Heart right ventricle (tissue), 16 donors: ENCODE measurements at regions of chr14 and their contacts with region 1.

Region 1: DNA sequence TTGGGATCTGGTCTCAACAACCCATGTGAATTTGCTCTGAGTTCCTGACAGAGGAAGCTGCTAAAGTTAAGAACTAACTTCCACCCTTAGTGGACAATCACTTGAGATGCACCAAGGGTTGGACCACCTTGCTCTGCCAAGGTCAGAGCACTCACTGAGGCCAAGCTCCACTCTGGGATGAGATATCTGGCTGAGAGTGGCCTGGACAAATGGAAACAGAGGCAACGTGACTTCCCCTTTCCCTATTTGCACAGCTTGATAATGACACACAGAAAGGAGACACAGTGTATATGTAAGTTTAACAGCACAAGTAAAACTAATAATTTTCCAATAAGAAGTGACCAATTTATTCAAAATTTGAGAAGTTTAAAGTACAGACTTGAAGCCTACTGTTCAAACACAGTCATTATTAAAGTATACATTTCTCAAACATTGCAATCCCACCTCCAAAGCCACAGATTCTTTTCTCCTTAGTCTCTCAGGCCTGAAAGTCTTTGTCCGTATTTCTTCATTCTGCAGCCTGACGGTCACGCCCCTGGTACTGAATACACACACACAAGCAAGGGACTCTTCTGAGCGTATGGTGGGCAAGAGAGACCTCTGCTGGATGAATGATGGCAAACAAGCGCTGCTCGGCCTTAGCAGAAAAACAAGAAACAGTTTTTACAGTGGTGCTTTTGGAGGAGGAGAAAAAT is 28.6 kb downstream of the TMEM30B start:
- DNase-seq: peak; percentile 18 to 73
- ATAC-seq: peak in 7 of 8 donors; percentile 86 to 96 (median 95)
- H3K4me3 ChIP-seq: no peak overlapping the region
- H3K27ac ChIP-seq: no peak overlapping the region
- H3K4me1 ChIP-seq: peaks cover 0 to 10% (median 3%) of the 10 kb centered on the region in 9 donors
- H3K27me3 ChIP-seq: no peaks in the 10 kb centered on the region
- CTCF ChIP-seq: peak; percentile 50 to 90 (median 84)

Region 2: GRCh38 chr14:60349663-60350365 is 902.7 kb before region 1 on chr14:
- intact Hi-C with region 1: loop called in 8 of 10 experiments (anchors 5 to 10 kb)
- DNase-seq: peak in 1 of 2 donors; percentile 26
- ATAC-seq: peak in 3 of 8 donors; percentile 51 to 73 (median 65)
- H3K4me3 ChIP-seq: peak overlapping the region in 2 of 10 donors; percentile 15 to 27
- H3K27ac ChIP-seq: no peak overlapping the region
- H3K4me1 ChIP-seq: peaks cover 0 to 7% (median 5%) of the 10 kb centered on the region in 9 donors
- H3K27me3 ChIP-seq: peaks cover 0 to 6% (median 0%) of the 10 kb centered on the region in 7 donors
- CTCF ChIP-seq: peak; percentile 41 to 73 (median 67)

Region 3: DNA sequence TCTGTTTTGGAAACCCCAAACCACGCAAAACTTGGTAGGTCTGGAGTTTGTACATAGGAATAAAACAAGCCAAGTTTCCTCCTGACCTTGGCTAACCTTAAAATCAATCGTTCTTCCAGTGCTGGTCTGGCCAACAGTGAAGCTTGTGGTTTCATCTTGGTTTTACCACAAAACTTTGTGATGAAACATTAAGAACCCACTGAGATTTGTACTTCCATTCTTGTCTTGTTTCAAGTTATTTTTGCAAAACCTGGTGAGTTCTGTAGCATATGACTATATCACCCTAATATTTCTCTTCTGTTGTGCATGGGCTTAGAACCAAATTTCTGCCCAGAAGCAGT is 629.6 kb before region 1 on chr14:
- intact Hi-C with region 1: loop called (anchors 1 to 5 kb)
- DNase-seq: no peak
- ATAC-seq: no peak
- H3K4me3 ChIP-seq: no peak overlapping the region
- H3K27ac ChIP-seq: no peak overlapping the region
- H3K4me1 ChIP-seq: no peaks in the 10 kb centered on the region
- H3K27me3 ChIP-seq: peaks cover 0 to 45% (median 15%) of the 10 kb centered on the region in 7 donors
- CTCF ChIP-seq: no peak

Region 4: DNA sequence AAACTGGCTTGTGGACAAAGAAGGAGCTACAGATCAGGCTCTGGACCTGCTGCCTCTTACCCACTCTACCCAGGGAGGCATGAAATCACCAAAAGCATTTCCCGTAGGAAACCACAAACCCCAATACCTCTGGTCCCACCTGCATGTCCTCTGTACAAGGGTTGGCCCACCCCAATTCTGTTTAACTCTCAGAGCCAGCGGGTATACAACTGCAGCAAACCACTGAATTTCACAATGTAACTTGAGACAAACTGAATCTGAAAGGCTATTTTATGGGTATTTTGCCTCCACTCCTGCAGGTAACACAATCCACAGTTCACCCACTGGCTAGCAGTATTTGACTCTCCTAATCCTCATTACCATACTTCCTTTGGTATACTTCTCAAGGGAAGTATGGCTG is 619.7 kb before region 1 on chr14:
- intact Hi-C with region 1: loop called in 1 of 10 experiments (anchors 5 kb)
- DNase-seq: no peak
- ATAC-seq: no peak
- H3K4me3 ChIP-seq: no peak overlapping the region
- H3K27ac ChIP-seq: no peak overlapping the region
- H3K4me1 ChIP-seq: peaks cover 0 to 8% (median 6%) of the 10 kb centered on the region in 9 donors
- H3K27me3 ChIP-seq: peaks cover 0 to 86% (median 43%) of the 10 kb centered on the region in 7 donors
- CTCF ChIP-seq: no peak

Region 5: DNA sequence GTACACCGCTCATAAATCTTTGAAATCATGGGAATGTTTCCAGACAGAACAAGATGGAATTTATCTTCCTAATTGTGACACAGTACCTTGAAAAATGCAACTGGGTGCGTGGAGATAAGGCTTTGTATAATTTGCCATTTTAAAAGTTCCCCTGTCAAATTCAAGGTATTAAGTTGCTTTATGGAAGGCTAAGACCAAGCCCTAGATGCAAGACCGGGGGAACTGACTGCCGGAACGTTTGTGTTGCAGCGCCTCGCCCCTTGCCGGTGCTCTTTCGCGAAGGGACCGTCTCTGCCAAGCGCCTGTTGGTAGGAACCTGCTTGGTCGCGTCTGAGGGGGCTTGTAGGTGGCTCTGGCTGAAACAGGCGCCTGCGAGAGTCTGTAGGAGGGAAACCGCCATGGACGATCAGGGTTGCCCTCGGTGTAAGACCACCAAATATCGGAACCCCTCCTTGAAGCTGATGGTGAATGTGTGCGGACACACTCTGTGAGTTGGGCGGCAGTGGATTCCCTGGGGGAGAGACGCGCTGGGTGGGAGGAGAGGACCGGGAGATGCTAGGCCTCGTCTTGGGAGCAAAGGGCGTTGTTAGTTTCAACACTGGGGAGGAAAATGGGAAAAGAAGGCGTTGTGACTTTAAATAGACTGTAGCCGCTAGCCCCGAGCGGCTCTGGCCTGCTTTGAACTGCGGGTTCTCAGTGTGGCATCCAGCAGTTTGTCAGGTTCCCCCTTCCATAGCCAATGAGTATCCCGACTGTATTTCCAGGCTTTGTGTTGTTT is 517.9 kb before region 1 on chr14 and contains the start of gene MNAT1:
- intact Hi-C with region 1: loop called in 1 of 10 experiments (anchors 10 kb)
- DNase-seq: peak; percentile 75 to 76
- ATAC-seq: peak; percentile 88 to 98 (median 96)
- H3K4me3 ChIP-seq: peak within 1 kb of the TSS; percentile 58 to 96 (median 82)
- H3K27ac ChIP-seq: peak within 1 kb of the TSS in 9 of 10 donors; percentile 55 to 85 (median 82)
- H3K4me1 ChIP-seq: peaks cover 0 to 30% (median 26%) of the 10 kb centered on the region in 9 donors
- H3K27me3 ChIP-seq: peaks cover 0 to 23% (median 0%) of the 10 kb centered on the region in 7 donors
- CTCF ChIP-seq: no peak
- total RNA-seq, gene MNAT1: 22.8 to 35.3 (median 29.9) TPM